ENCODE measurements at regions of chr1 and their contacts with region 1.

Region 1: DNA sequence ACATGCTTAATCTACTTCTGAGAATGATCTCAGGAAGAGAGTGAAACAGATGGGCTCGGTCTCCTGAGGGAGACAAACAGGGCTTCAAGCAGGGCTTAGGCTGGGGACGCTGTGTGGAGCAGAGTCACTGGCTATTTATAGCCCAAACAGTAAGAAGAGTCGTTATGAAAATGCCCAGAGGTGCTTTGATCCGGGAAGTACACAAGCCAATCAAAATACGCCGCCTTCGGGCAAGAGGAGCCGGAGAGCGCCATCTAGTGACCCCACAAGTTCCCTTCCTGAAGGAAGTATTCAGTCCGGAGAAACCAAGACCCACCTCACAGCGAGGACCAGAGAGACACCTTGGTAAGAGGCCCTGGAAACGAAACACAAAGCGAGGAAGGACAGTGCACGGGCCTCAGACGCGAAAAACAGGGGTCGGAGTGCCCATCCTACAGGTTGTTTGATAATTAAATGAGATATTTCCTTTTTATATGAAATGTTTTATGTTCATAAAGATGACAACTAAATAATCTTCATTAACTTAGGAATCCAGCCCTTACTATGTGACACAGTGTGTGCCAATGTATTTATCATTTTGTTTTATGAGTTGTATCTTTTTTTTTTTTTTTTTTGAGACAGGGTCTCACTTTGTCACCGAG is 25.0 kb upstream of the SCCPDH start:
- DNase-seq: peak; percentile 86 to 92 (median 87)
- ATAC-seq: peak; percentile 83
- H3K4me3 ChIP-seq: no peak overlapping the region
- H3K4me1 ChIP-seq: peaks cover 18% of the 10 kb centered on the region
- CTCF ChIP-seq: peak; percentile 76

Region 2: GRCh38 chr1:246566128-246566812 is 132.9 kb before region 1 on chr1 and contains the starts of genes CNST and TFB2M:
- intact Hi-C with region 1: loop called in 1 of 2 experiments (anchors 5 kb)
- DNase-seq: peak; percentile 97 to 99 (median 98)
- ATAC-seq: peak; percentile 95
- H3K4me3 ChIP-seq: peak within 1 kb of the TSS; percentile 83
- H3K4me1 ChIP-seq: peaks cover 44% of the 10 kb centered on the region
- CTCF ChIP-seq: no peak
- total RNA-seq, gene CNST: 31.6 to 47.7 (median 44.6) TPM
- total RNA-seq, gene TFB2M: 10.3 to 12.9 (median 10.5) TPM

Region 3: DNA sequence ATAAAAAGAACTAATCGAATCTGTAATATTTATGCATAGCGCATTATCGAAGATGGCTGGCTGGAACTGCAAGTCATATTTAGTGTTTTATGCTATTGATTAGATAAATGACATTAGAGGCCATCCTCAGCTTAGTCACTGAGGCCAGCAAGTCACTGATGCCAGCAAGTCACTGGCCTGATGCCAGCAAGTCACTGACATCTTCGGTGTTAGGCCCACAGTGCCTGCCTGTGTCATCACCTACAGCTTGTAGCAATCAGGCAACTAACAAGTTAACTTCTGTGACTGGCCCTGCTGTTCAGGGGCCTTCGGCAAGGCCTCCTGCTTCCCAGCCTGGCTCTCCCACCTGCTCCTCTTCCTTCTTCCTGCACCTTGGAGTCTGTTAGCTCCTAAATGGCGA is 40.6 kb before region 1 on chr1:
- intact Hi-C with region 1: no loop called
- DNase-seq: no peak
- ATAC-seq: no peak
- H3K4me3 ChIP-seq: no peak overlapping the region
- H3K4me1 ChIP-seq: no peaks in the 10 kb centered on the region
- CTCF ChIP-seq: no peak

Region 4: GRCh38 chr1:246773213-246773641 is 74.0 kb after region 1 on chr1:
- intact Hi-C with region 1: no loop called
- DNase-seq: no peak
- ATAC-seq: peak; percentile 18
- H3K4me3 ChIP-seq: no peak overlapping the region
- H3K4me1 ChIP-seq: no peaks in the 10 kb centered on the region
- CTCF ChIP-seq: no peak